Sigmoid colon (tissue), 7 donors: ENCODE measurements at regions of chr13 and their contacts with region 1.

Region 1: GRCh38 chr13:52450012-52450792 is at the start of gene VPS36:
- DNase-seq: peak; percentile 97
- H3K4me3 ChIP-seq: peak within 1 kb of the TSS; percentile 57 to 88 (median 84)
- H3K27ac ChIP-seq: peak within 1 kb of the TSS; percentile 90 to 99 (median 96)
- H3K4me1 ChIP-seq: peaks cover 0 to 40% (median 37%) of the 10 kb centered on the region in 4 donors
- H3K27me3 ChIP-seq: no peaks in the 10 kb centered on the region
- CTCF ChIP-seq: peak in 3 of 4 experiments; percentile 90 to 100 (median 95)
- EP300 ChIP-seq: no peak
- POLR2A ChIP-seq: peak; percentile 59 to 77
- total RNA-seq, gene VPS36: 52.8 to 85.0 (median 66.4) TPM

Region 2: GRCh38 chr13:51405176-51405575 is 1045.0 kb before region 1 on chr13:
- intact Hi-C with region 1: loop called (anchors 10 kb)
- DNase-seq: no peak
- H3K4me3 ChIP-seq: no peak overlapping the region
- H3K27ac ChIP-seq: no peak overlapping the region
- H3K4me1 ChIP-seq: no peaks in the 10 kb centered on the region
- H3K27me3 ChIP-seq: no peaks in the 10 kb centered on the region
- CTCF ChIP-seq: no peak
- EP300 ChIP-seq: no peak
- POLR2A ChIP-seq: no peak

Region 3: GRCh38 chr13:52011632-52012511 is 438.3 kb before region 1 on chr13 and contains the start of gene ALG11:
- intact Hi-C with region 1: loop called (anchors 2 kb)
- DNase-seq: peak; percentile 99
- H3K4me3 ChIP-seq: peak within 1 kb of the TSS; percentile 67 to 92 (median 78)
- H3K27ac ChIP-seq: peak within 1 kb of the TSS; percentile 76 to 79 (median 77)
- H3K4me1 ChIP-seq: peaks cover 0 to 32% (median 19%) of the 10 kb centered on the region in 4 donors
- H3K27me3 ChIP-seq: no peaks in the 10 kb centered on the region
- CTCF ChIP-seq: no peak
- EP300 ChIP-seq: no peak
- POLR2A ChIP-seq: peak; percentile 61 to 65
- total RNA-seq, gene ALG11: 11.6 to 20.6 (median 17.4) TPM

Region 4: GRCh38 chr13:52194184-52194868 is 255.9 kb before region 1 on chr13:
- intact Hi-C with region 1: loop called (anchors 2 kb)
- DNase-seq: peak; percentile 93
- H3K4me3 ChIP-seq: peak overlapping the region; percentile 58 to 83 (median 76)
- H3K27ac ChIP-seq: peak overlapping the region; percentile 80 to 90 (median 88)
- H3K4me1 ChIP-seq: peaks cover 2 to 24% (median 15%) of the 10 kb centered on the region in 4 donors
- H3K27me3 ChIP-seq: no peaks in the 10 kb centered on the region
- CTCF ChIP-seq: no peak
- EP300 ChIP-seq: no peak
- POLR2A ChIP-seq: peak in 1 of 2 donors; percentile 38

Region 5: GRCh38 chr13:52374848-52375411 is 75.3 kb before region 1 on chr13:
- intact Hi-C with region 1: no loop called
- DNase-seq: no peak
- H3K4me3 ChIP-seq: no peak overlapping the region
- H3K27ac ChIP-seq: no peak overlapping the region
- H3K4me1 ChIP-seq: no peaks in the 10 kb centered on the region
- H3K27me3 ChIP-seq: no peaks in the 10 kb centered on the region
- CTCF ChIP-seq: no peak
- EP300 ChIP-seq: no peak
- POLR2A ChIP-seq: no peak

Region 6: GRCh38 chr13:52617070-52618060 is 167.2 kb after region 1 on chr13:
- intact Hi-C with region 1: loop called (anchors 5 kb)
- DNase-seq: peak; percentile 89
- H3K4me3 ChIP-seq: peak overlapping the region; percentile 53 to 72 (median 63)
- H3K27ac ChIP-seq: peak overlapping the region; percentile 79 to 86 (median 84)
- H3K4me1 ChIP-seq: peaks cover 0 to 14% (median 7%) of the 10 kb centered on the region in 4 donors
- H3K27me3 ChIP-seq: no peaks in the 10 kb centered on the region
- CTCF ChIP-seq: no peak
- EP300 ChIP-seq: no peak
- POLR2A ChIP-seq: peak in 1 of 2 donors; percentile 8

Region 7: DNA sequence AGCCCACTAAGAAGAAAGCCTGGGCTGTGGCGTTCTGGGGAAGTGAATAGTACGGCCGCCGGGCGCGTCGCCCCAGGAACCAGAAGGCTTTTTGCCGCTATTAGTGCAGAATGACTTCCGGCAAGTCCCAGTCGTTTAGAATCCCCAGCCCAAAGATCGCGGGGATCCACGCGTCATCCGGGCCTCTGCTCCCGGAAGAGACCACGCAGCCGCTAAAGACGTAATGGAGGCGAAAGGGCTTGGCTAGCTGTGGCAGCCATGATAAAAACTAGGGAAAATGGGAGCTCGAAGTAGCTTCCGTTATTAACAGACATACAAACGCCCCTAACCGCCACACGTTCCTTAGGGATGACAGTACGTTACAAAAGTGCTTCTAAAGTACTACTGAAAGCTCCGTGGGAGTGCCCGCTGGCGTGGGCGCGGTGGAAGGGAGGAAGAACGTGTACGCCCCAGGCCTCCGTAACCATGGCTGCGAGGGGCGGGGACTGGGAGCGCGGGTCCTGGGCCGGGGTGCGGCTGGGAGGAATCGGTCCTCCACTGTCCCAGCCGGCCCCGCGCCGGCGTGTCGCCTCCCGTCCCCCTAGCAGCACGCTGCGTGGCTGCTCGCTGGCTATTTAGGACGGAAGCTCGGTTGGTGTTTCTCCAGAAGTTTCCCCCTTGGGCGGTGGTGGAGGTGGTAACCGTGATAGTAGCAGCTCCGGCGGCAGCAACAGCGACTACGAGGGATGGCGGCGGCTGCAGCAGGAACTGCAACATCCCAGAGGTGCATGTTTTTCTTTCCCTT is 202.2 kb after region 1 on chr13 and contains the start of gene SUGT1:
- intact Hi-C with region 1: loop called (anchors 5 kb)
- DNase-seq: peak; percentile 98
- H3K4me3 ChIP-seq: peak within 1 kb of the TSS; percentile 70 to 85 (median 74)
- H3K27ac ChIP-seq: peak within 1 kb of the TSS; percentile 93 to 95 (median 94)
- H3K4me1 ChIP-seq: peaks cover 0 to 45% (median 33%) of the 10 kb centered on the region in 4 donors
- H3K27me3 ChIP-seq: no peaks in the 10 kb centered on the region
- CTCF ChIP-seq: peak in 2 of 4 experiments; percentile 61 to 64
- EP300 ChIP-seq: peak in 1 of 4 donors; percentile 37
- POLR2A ChIP-seq: peak; percentile 72 to 73
- total RNA-seq, gene SUGT1: 21.9 to 48.5 (median 39.4) TPM

Region 8: GRCh38 chr13:53520132-53520531 is 1069.9 kb after region 1 on chr13:
- intact Hi-C with region 1: no loop called
- DNase-seq: no peak
- H3K4me3 ChIP-seq: no peak overlapping the region
- H3K27ac ChIP-seq: no peak overlapping the region
- H3K4me1 ChIP-seq: no peaks in the 10 kb centered on the region
- H3K27me3 ChIP-seq: no peaks in the 10 kb centered on the region
- CTCF ChIP-seq: no peak
- EP300 ChIP-seq: no peak
- POLR2A ChIP-seq: no peak